ENCODE measurements at regions of chr13 and their contacts with region 1.

Region 1: GRCh38 chr13:33519561-33520467 is 234.3 kb upstream of the STARD13 start:
- DNase-seq: peak; percentile 78
- H3K4me3 ChIP-seq: no peak overlapping the region
- H3K27ac ChIP-seq: peak overlapping the region; percentile 39
- H3K27me3 ChIP-seq: no peaks in the 10 kb centered on the region
- CTCF ChIP-seq: no peak

Region 2: GRCh38 chr13:33426131-33426530 is 93.7 kb before region 1 on chr13:
- CTCF ChIA-PET with region 1: no interaction called
- POLR2A ChIA-PET with region 1: no interaction called
- DNase-seq: no peak
- H3K4me3 ChIP-seq: no peak overlapping the region
- H3K27ac ChIP-seq: no peak overlapping the region
- H3K27me3 ChIP-seq: no peaks in the 10 kb centered on the region
- CTCF ChIP-seq: no peak

Region 3: GRCh38 chr13:33542283-33543088 is 22.7 kb after region 1 on chr13:
- CTCF ChIA-PET with region 1: interaction called, 10 read pairs
- POLR2A ChIA-PET with region 1: no interaction called
- DNase-seq: peak; percentile 99
- H3K4me3 ChIP-seq: peak overlapping the region; percentile 56
- H3K27ac ChIP-seq: peak overlapping the region; percentile 96
- H3K27me3 ChIP-seq: no peaks in the 10 kb centered on the region
- CTCF ChIP-seq: peak; percentile 85

Measured in AG04450 (cell line).